Caco-2 (cell line): ENCODE measurements at regions of chr9 and their contacts with region 1.

Region 1: DNA sequence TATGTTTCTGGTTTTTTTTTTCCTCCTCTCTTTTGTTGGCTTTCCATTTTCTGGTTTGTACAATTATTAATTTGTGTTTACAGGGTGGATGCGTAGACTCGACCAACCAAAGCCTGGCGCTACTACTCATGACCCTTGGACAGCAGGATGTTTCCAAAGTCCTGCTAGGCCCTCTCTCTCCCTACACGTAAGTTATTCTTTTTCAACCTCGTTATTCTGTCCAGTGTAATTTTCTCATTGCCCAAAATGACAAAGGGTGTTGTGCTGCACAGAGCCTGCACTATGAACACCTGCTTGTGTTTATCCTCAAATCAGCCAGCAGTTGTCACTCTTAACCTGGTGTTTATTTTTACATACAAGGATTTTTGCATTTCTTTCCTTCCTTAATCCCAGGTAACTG is 56.6 kb downstream of the RCL1 start:
- DNase-seq: no peak
- H3K4me3 ChIP-seq: no peak overlapping the region
- H3K4me3 Mint-ChIP-seq: no peak overlapping the region
- H3K27ac Mint-ChIP-seq: no peak overlapping the region
- H3K4me1 ChIP-seq: no peaks in the 10 kb centered on the region
- H3K4me1 Mint-ChIP-seq: no peaks in the 10 kb centered on the region
- H3K27me3 ChIP-seq: no peaks in the 10 kb centered on the region
- H3K27me3 Mint-ChIP-seq: no peaks in the 10 kb centered on the region
- CTCF ChIP-seq: no peak

Region 2: DNA sequence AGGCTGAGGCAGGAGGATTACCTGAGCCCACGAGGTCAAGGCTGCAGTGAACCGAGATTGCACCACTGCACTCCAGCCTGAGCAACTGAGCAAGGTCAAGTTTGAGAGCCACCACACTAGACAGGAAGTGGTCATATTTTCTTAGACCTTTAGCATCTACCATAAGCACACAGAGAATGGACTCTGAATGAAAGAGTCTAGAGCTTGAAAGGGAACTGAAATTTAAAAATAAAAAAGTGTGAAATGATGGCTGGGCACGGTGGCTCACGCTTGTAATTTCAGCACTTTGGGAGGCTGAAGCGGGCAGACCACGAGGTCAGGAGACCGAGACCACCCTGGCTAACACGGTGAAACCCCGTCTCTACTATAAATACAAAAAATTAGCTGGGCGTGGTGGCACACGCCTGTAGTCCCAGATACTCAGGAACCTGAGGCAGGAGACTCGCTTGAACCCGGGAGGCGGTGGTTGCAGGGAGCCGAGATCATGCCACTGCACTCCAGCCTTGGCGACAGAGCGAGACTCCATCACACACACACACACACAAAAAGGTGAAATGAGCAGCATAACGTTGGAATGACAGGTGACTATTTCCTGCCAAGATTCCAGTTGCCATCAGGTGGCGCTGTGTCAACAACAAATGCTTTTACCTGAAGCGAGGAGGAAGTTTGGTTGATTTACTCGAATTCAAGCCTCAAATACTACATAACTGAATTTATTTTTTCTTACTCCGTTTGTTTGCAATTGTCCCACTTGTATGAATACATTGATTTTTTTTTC is 87.1 kb before region 1 on chr9:
- CTCF ChIA-PET with region 1: no interaction called
- POLR2A ChIA-PET with region 1: no interaction called
- intact Hi-C with region 1: no loop called
- DNase-seq: peak; percentile 55 to 70
- H3K4me3 ChIP-seq: no peak overlapping the region
- H3K4me3 Mint-ChIP-seq: peak overlapping the region; percentile 25
- H3K27ac Mint-ChIP-seq: no peak overlapping the region
- H3K4me1 ChIP-seq: 0 out of 2 replicates have a peak, but pooled peaks cover 3% of the 10 kb centered on the region
- H3K4me1 Mint-ChIP-seq: no peaks in the 10 kb centered on the region
- H3K27me3 ChIP-seq: no peaks in the 10 kb centered on the region
- H3K27me3 Mint-ChIP-seq: peaks cover 10% of the 10 kb centered on the region
- CTCF ChIP-seq: peak; percentile 65 to 78

Region 3: GRCh38 chr9:4781408-4781807 is 68.0 kb before region 1 on chr9:
- CTCF ChIA-PET with region 1: no interaction called
- POLR2A ChIA-PET with region 1: no interaction called
- intact Hi-C with region 1: no loop called
- DNase-seq: no peak
- H3K4me3 ChIP-seq: no peak overlapping the region
- H3K4me3 Mint-ChIP-seq: no peak overlapping the region
- H3K27ac Mint-ChIP-seq: no peak overlapping the region
- H3K4me1 ChIP-seq: 0 out of 2 replicates have a peak, but pooled peaks cover 8% of the 10 kb centered on the region
- H3K4me1 Mint-ChIP-seq: peaks cover 9% of the 10 kb centered on the region
- H3K27me3 ChIP-seq: no peaks in the 10 kb centered on the region
- H3K27me3 Mint-ChIP-seq: no peaks in the 10 kb centered on the region
- CTCF ChIP-seq: no peak

Region 4: DNA sequence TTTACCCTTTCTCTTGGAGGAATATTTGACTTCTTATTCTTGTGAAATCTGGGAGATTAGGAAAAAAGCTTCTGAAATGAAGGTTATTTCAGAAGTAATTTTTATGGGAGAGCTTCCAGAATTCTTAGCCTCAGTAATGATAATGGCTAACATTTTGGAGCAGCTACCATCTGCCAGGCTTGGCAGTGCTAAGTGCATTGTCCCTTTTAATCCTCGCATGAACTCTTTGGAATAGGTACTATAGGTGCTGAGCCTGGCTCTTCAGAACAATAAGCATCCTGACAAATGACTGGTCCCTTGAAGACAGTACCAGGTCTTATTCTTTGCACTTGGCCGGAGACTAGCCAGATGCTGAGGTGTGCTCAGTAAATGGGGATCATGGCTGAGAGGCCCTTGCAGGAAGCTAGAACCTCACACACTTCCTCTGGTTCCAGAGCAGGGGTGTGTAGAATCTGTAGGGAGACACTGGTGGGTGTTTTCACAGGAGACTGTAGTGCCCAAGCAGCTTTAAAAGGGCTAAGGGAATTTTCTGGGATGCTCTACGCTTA is 34.0 kb after region 1 on chr9:
- CTCF ChIA-PET with region 1: no interaction called
- POLR2A ChIA-PET with region 1: no interaction called
- intact Hi-C with region 1: loop called (anchors 5 kb)
- DNase-seq: no peak
- H3K4me3 ChIP-seq: no peak overlapping the region
- H3K4me3 Mint-ChIP-seq: no peak overlapping the region
- H3K27ac Mint-ChIP-seq: no peak overlapping the region
- H3K4me1 ChIP-seq: no peaks in the 10 kb centered on the region
- H3K4me1 Mint-ChIP-seq: no peaks in the 10 kb centered on the region
- H3K27me3 ChIP-seq: no peaks in the 10 kb centered on the region
- H3K27me3 Mint-ChIP-seq: no peaks in the 10 kb centered on the region
- CTCF ChIP-seq: no peak